ENCODE measurements at regions of chr14 and their contacts with region 1.

Region 1: DNA sequence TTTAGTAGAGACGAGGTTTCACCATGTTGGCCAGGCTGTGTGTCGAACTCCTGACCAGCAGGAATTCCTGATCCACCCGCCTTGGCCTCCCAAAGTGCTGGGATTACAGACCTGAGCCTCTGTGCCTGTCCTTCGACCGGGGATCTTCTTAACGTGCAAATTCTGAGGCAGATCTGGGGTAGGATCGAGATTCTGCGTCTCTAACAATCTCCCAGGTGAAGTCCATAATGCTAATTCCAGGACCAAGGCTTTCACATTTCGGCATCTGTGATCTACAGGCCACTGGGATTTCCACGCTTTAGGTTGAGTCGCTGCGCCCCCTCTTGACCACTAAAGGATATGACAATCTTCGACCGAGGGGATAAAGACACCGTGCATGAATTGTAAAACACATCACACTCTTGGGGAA is 24.8 kb downstream of the FOS start:
- DNase-seq: peak; percentile 55
- ATAC-seq: peak; percentile 65

Region 2: DNA sequence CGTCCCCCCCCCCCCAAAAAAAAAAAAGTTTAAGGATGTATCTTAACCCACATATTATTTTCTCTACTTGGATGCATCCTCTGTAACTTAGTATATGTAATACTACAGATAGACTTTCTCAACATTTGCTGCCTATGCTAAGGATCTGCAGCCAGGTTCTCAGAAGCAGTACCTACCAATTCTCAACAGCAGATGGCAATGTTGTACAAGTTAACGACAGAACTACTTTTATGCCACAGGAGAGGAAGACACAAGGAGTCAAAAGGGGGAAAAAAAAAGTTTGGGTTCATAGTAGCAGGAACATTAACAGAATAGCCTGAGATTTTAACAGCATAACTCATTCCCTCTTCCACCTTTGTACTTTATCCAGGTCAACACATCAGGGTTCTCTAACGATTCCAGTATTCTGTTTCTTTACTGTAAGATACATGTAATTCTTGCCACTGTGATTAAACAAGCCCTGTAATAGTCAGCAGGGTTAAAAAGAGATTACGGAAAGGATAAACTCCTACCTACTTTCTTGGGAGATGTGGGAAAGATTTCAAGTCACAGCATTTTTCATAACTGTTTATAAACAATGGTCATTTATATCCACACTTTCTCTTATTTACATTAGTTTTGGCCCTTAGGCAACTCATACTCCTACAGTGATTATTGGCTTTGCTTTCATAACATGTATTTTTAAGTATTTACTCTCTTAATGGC is 170.9 kb before region 1 on chr14:
- intact Hi-C with region 1: loop called (anchors 2 kb)
- DNase-seq: no peak
- ATAC-seq: peak; percentile 72

Measured in left ventricle myocardium superior (tissue), 1 donor.